Common myeloid progenitor, CD34-positive (primary cell): ENCODE measurements at regions of chr1 and their contacts with region 1.

Region 1: GRCh38 chr1:159798893-159799292 is 3.3 kb upstream of the FCRL6 start:
- DNase-seq: peak; percentile 79 to 86 (median 83)
- H3K4me3 ChIP-seq: no peak overlapping the region
- H3K27ac ChIP-seq: no peak overlapping the region
- H3K4me1 ChIP-seq: peaks cover 0 to 13% (median 8%) of the 10 kb centered on the region in 4 experiments
- H3K27me3 ChIP-seq: peaks cover 0 to 6% (median 0%) of the 10 kb centered on the region in 5 experiments

Region 2: DNA sequence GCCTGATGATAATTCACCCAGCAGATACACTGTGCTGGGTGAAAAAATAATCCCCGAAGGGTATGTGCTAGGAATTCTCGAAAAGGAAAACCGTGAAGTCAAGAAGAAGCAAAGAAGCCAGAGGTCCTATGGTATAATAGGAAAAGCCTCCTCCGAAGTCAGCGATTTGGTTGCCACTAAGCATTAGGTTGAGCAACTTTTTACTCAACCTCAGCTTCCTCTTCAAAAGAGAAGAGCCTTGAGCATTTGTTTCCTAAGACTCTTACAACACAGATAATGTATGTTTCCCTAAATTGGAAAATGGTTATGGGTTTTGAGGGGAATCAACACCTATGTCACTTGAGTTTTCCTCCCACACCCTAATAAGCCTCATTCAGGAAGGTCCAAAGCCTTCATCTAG is 989.0 kb before region 1 on chr1:
- CTCF ChIA-PET with region 1: no interaction called
- POLR2A ChIA-PET with region 1: no interaction called
- DNase-seq: peak in 2 of 3 donors; percentile 45 to 51
- H3K4me3 ChIP-seq: peak overlapping the region in 1 of 7 experiments; percentile 23
- H3K27ac ChIP-seq: no peak overlapping the region
- H3K4me1 ChIP-seq: peaks cover 7 to 15% (median 9%) of the 10 kb centered on the region in 4 experiments
- H3K27me3 ChIP-seq: no peaks in the 10 kb centered on the region

Region 3: GRCh38 chr1:159214149-159214760 is 584.6 kb before region 1 on chr1:
- CTCF ChIA-PET with region 1: interaction called, 12 read pairs
- POLR2A ChIA-PET with region 1: no interaction called
- DNase-seq: peak; percentile 40 to 57 (median 48)
- H3K4me3 ChIP-seq: no peak overlapping the region
- H3K27ac ChIP-seq: no peak overlapping the region
- H3K4me1 ChIP-seq: peaks cover 0 to 3% (median 0%) of the 10 kb centered on the region in 4 experiments
- H3K27me3 ChIP-seq: peaks cover 0 to 9% (median 0%) of the 10 kb centered on the region in 5 experiments

Region 4: DNA sequence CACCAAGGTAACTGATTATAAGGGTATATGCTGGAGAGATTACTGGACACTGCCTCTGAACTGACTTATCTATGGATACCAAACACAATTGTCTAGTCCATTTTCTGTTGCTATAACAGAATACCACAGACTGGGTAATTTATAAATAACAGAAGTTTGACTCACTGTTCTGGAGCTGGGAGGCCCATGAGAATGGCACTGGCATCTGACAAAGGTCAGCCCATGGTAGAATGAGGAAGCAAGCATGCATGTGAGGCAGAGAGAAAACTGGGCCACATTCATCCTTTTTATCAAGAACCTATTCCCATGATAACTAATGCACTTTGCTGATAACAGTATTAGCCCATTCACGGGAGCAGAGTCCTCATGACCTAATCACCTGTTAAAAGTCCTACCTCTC is 459.4 kb before region 1 on chr1:
- CTCF ChIA-PET with region 1: no interaction called
- POLR2A ChIA-PET with region 1: no interaction called
- DNase-seq: peak in 1 of 3 donors; percentile 13
- H3K4me3 ChIP-seq: no peak overlapping the region
- H3K27ac ChIP-seq: no peak overlapping the region
- H3K4me1 ChIP-seq: peaks cover 0 to 3% (median 0%) of the 10 kb centered on the region in 4 experiments
- H3K27me3 ChIP-seq: no peaks in the 10 kb centered on the region

Region 5: GRCh38 chr1:159821171-159821867 is 22.4 kb after region 1 on chr1:
- CTCF ChIA-PET with region 1: interaction called, 111 read pairs
- POLR2A ChIA-PET with region 1: interaction called, 3 read pairs
- DNase-seq: peak in 1 of 3 donors; percentile 22
- H3K4me3 ChIP-seq: no peak overlapping the region
- H3K27ac ChIP-seq: no peak overlapping the region
- H3K4me1 ChIP-seq: peaks cover 4 to 11% (median 10%) of the 10 kb centered on the region in 4 experiments
- H3K27me3 ChIP-seq: peaks cover 0 to 5% (median 0%) of the 10 kb centered on the region in 5 experiments

Region 6: DNA sequence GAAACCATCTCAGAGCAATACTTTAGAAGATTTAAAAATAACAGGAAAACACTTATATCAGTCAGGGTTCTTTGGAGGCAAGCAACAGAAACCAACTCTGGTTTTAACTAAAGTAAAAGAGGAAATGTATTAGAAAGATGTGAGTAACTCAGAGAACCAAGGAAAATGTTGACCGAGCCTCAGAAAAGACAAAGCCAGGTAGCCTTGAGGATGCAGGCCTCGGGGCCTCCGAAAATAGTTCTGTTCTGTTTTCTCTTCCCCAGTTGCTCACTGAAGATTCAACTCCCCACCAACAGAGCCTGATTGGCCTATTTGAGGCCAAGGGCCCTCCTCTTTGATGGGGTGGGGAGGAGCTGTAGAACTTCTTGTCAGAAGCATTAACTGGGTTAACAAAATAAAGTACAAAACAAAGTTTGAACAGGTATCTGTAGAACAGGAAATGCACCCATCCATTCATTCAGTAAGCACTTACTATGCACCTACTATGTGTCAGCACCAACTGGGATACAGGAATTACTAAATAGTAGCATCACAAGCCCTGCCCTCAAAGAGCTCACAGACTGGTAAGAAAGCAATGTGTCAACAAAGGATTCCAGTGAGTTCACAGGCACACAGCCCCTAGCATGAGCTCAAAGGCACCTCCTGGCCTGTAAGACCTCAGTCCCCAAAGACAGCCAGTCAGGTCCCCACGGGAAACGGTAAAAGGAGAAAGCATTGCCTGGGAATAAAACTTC is 40.4 kb after region 1 on chr1:
- CTCF ChIA-PET with region 1: interaction called, 111 read pairs
- POLR2A ChIA-PET with region 1: no interaction called
- DNase-seq: peak in 2 of 3 donors; percentile 46 to 57
- H3K4me3 ChIP-seq: no peak overlapping the region
- H3K27ac ChIP-seq: no peak overlapping the region
- H3K4me1 ChIP-seq: peaks cover 0 to 5% (median 0%) of the 10 kb centered on the region in 4 experiments
- H3K27me3 ChIP-seq: no peaks in the 10 kb centered on the region

Region 7: GRCh38 chr1:159872881-159873280 is 74.0 kb after region 1 on chr1:
- CTCF ChIA-PET with region 1: interaction called, 19 read pairs
- POLR2A ChIA-PET with region 1: interaction called, 3 read pairs
- DNase-seq: no peak
- H3K4me3 ChIP-seq: no peak overlapping the region
- H3K27ac ChIP-seq: no peak overlapping the region
- H3K4me1 ChIP-seq: peaks cover 0 to 16% (median 8%) of the 10 kb centered on the region in 4 experiments
- H3K27me3 ChIP-seq: no peaks in the 10 kb centered on the region

Region 8: GRCh38 chr1:159936273-159936904 is 137.5 kb after region 1 on chr1:
- CTCF ChIA-PET with region 1: interaction called, 10 read pairs
- POLR2A ChIA-PET with region 1: no interaction called
- DNase-seq: peak; percentile 56 to 74 (median 66)
- H3K4me3 ChIP-seq: peak overlapping the region in 1 of 7 experiments; percentile 74
- H3K27ac ChIP-seq: no peak overlapping the region
- H3K4me1 ChIP-seq: peaks cover 8 to 37% (median 23%) of the 10 kb centered on the region in 4 experiments
- H3K27me3 ChIP-seq: no peaks in the 10 kb centered on the region